Activated T-helper 2 cell treated with anti-CD3 and anti-CD28 coated beads, Interferon-gamma antibody, Interleukin-2, Interleukin-4, amounts not matched to agents 10 μg/mL and 5 μg/mL and 100 μg/mL, durations not matched to agents 14 hours and 24 hours and 36 hours (primary cell): ENCODE measurements at regions of chr12 and their contacts with region 1.

Region 1: GRCh38 chr12:130916251-130916911 is 37.3 kb upstream of the ADGRD1 start:
- DNase-seq: no peak
- H3K4me3 Mint-ChIP-seq: no peak overlapping the region
- H3K27ac Mint-ChIP-seq: no peak overlapping the region
- H3K4me1 Mint-ChIP-seq: no peaks in the 10 kb centered on the region
- H3K27me3 Mint-ChIP-seq: peaks cover 31% of the 10 kb centered on the region

Region 2: GRCh38 chr12:131132118-131132892 is 215.9 kb after region 1 on chr12:
- intact Hi-C with region 1: loop called (anchors 2 kb)
- DNase-seq: peak; percentile 49
- H3K4me3 Mint-ChIP-seq: no peak overlapping the region
- H3K27ac Mint-ChIP-seq: no peak overlapping the region
- H3K4me1 Mint-ChIP-seq: peaks cover 1% of the 10 kb centered on the region
- H3K27me3 Mint-ChIP-seq: no peaks in the 10 kb centered on the region